Activated CD8-positive, alpha-beta memory T cell treated with anti-CD3 and anti-CD28 coated beads, Interleukin-2, amount 10 ng/mL, durations not matched to agents 7 days and 5 days (primary cell): ENCODE measurements at regions of chr7 and their contacts with region 1.

Region 1: DNA sequence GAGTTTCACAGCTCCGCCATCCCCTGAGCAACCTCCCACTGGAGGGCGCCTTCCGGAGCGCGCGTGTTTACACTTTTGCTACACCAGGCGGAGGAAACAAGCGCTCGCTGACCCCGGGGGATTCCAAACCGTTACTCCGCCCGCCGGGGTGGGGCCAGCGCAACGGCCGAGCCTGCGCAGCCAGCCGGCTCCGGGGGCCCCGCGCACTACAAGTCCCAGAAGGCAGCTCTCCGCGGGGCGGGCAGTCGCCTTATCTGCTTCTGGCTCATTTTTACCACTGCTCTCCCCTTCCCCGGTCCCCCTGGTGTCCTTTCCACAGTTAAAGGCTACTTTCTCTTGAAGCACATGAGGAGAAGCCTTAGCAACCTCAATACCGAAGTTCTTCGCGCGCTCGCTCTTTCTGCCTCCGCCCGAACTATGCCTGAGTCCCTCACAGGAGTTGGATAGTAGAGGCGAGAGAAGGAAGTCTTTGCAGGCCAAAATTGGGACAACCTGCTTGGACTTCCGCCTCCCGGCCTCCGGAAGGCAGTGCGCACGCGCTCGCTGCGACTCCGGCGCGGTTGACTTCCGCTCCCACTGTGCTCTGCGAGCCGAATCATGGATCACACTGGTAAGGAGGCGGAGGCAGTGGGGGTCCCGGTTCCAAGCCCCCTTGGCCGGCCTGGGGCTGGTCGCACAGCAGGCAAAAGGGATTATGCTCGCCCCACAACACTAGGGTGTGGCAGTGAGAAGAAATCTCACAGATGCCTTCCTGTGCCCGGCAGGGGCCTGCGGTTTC is at the start of gene CBLL1:
- DNase-seq: peak; percentile 98
- ATAC-seq: peak; percentile 94
- H3K4me3 Mint-ChIP-seq: peak within 1 kb of the TSS; percentile 95
- H3K27ac Mint-ChIP-seq: peak within 1 kb of the TSS; percentile 100
- H3K4me1 Mint-ChIP-seq: peaks cover 43% of the 10 kb centered on the region
- H3K27me3 Mint-ChIP-seq: no peaks in the 10 kb centered on the region
- total RNA-seq, gene CBLL1: 32.2 to 39.7 TPM

Region 2: DNA sequence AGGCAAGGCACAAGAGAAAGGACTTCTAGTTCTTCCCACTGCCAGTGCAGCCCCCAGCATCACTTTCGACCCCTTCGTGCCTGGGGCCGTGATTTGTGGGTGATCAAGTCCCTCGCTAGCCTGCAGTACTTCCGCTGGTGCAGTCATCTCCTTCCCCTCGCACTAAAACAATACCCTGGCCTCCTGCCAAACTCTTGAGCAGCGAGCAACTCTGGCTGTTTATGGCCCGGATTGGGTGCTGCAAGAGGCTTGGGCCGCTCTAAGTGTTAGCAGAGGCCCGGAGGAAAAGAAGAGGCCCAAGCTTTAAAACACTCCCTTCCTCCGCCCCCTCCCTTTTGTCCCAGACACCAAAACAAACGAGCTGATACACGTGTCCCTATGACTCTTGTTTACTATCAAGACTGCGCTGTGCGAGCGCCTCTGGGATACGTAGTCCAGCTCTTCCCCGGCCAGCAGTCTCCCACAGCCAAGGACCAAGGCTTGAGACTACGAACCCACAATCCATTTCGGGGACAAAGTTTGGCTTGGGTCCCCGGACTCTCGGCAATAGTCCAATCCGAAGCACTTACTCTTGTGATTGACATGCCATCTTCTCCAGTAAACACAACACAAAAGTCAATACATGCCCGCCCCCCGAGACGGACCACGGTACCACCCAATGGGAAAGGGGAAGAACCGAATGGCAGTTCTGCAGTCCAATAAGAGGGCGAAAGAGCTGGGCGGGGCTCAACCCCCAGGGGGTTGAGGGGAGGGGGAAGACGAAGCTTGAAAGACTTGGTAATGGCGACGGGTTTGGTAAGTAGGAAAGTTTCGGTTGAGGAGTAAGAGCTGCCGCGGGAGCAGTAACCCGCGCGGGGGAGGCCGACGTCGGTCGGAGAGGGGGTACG is 575.3 kb before region 1 on chr7 and contains the start of gene HBP1:
- CTCF ChIA-PET with region 1: interaction called, 11 read pairs
- DNase-seq: peak; percentile 99
- ATAC-seq: peak; percentile 89
- H3K4me3 Mint-ChIP-seq: peak within 1 kb of the TSS; percentile 94
- H3K27ac Mint-ChIP-seq: peak within 1 kb of the TSS; percentile 100
- H3K4me1 Mint-ChIP-seq: peaks cover 30% of the 10 kb centered on the region
- H3K27me3 Mint-ChIP-seq: peaks cover 6% of the 10 kb centered on the region
- total RNA-seq, gene HBP1: 22.5 to 25.5 TPM

Region 3: GRCh38 chr7:107725151-107725740 is 18.5 kb before region 1 on chr7:
- CTCF ChIA-PET with region 1: interaction called, 12 read pairs
- DNase-seq: peak; percentile 61
- ATAC-seq: no peak
- H3K4me3 Mint-ChIP-seq: no peak overlapping the region
- H3K27ac Mint-ChIP-seq: no peak overlapping the region
- H3K4me1 Mint-ChIP-seq: no peaks in the 10 kb centered on the region
- H3K27me3 Mint-ChIP-seq: peaks cover 23% of the 10 kb centered on the region

Region 4: DNA sequence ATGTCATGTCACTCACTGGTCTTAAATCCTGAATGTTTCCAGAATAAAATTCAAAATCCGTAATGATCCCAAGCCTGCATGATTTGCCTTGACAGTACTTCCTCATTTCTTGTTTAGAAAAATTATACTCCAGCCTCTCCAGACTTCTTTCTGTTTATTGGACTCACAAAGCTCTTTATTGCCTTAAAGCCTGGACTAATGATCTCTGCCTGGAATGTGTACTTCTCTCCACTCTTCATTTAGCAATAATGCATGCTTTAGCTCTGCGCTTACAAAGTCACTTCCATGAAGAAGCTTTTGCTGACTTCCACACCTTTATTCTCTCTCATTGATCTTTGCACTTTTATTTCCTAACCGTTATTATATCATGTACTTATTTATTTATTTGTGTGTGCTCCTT is 86.7 kb after region 1 on chr7:
- CTCF ChIA-PET with region 1: no interaction called
- DNase-seq: no peak
- ATAC-seq: no peak
- H3K4me3 Mint-ChIP-seq: no peak overlapping the region
- H3K27ac Mint-ChIP-seq: no peak overlapping the region
- H3K4me1 Mint-ChIP-seq: no peaks in the 10 kb centered on the region
- H3K27me3 Mint-ChIP-seq: peaks cover 3% of the 10 kb centered on the region

Region 5: DNA sequence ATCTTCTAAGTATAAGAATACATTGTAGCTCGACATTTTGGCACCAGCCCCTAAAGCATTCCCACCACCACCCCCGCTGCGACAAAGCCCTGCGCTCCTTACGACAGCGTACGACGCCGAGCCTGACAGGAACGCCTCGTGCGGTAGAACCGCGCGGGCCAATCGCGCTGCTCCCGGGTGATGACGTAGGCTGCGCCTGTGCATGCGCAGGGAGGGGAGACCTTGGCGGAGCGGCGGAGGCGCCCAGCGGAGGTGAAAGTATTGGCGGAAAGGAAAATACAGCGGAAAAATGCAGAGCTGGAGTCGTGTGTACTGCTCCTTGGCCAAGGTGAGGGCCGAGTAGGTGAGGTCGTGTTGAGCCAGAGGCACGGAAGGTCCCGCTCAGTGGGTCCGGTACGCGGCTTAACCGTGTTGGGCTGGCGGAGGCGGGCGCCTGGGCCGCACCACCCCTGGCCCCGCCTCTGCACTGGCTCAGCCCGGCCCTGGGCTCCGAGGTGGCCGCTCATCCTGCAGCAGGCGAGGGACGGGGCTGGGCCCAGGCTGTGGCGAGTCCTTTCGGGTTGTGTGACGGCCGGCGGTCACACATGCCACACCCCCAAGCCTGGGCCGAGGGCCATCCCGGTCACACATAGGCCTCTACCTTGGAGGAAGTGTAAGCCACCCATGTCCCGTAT is 147.3 kb after region 1 on chr7 and contains the start of gene DLD:
- CTCF ChIA-PET with region 1: interaction called, 14 read pairs
- DNase-seq: peak; percentile 97
- ATAC-seq: peak; percentile 98
- H3K4me3 Mint-ChIP-seq: peak within 1 kb of the TSS; percentile 95
- H3K27ac Mint-ChIP-seq: peak within 1 kb of the TSS; percentile 97
- H3K4me1 Mint-ChIP-seq: peaks cover 41% of the 10 kb centered on the region
- H3K27me3 Mint-ChIP-seq: peaks cover 4% of the 10 kb centered on the region
- total RNA-seq, gene DLD: 64.1 to 78.2 TPM

Region 6: DNA sequence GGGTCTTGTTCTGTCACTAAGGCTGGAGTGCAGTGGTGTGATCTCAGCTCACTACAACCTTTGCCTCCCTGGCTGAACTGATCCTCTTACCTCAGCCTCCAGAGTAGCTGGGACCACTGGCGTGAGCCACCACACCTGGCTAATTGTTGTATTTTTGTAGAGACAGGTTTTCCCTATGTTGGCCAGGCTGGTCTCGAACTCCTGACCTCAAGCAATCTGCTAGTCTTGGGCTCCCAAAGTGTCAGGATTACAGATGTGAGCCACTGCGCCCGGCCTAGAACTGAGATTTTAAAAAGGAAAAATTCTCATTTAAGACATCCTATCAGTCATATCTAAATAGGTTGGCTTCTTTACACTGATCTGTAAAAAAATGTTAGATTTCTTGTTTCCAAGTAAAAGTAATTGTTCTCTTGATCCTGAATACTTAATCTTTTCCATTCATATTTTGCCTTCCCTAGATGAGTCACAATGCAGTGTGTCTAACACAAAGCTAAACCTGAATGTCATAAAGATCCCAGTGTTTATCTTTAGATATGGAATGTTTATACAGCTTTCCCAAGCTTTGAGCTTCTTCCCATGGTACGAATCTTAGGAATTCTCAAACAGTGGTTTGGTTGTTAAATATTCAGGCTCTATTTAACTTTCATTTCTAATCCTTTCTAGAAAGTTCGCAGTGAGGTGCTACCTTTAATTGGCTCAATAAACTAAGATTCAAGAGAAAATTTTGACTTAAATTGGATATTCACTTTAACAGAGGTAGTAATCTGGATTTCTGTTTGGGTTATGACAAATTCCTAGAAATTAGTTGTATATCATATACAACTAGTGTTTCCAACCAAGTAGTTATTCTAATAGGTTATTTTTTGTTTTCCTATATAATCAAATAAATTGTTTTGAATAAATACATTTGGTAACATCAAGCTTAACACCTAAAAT is 271.3 kb after region 1 on chr7:
- CTCF ChIA-PET with region 1: no interaction called
- DNase-seq: no peak
- ATAC-seq: no peak
- H3K4me3 Mint-ChIP-seq: no peak overlapping the region
- H3K27ac Mint-ChIP-seq: no peak overlapping the region
- H3K4me1 Mint-ChIP-seq: no peaks in the 10 kb centered on the region
- H3K27me3 Mint-ChIP-seq: peaks cover 31% of the 10 kb centered on the region